Activated CD4-positive, alpha-beta T cell treated with anti-CD3 and anti-CD28 coated beads for 36 hours (primary cell): ENCODE measurements at regions of chr1 and their contacts with region 1.

Region 1: GRCh38 chr1:24830680-24831272 is 85.5 kb downstream of the CLIC4 start:
- DNase-seq: no peak
- ATAC-seq: peak; percentile 36
- H3K4me3 Mint-ChIP-seq: no peak overlapping the region
- H3K27ac Mint-ChIP-seq: no peak overlapping the region
- H3K4me1 Mint-ChIP-seq: no peaks in the 10 kb centered on the region
- H3K27me3 Mint-ChIP-seq: no peaks in the 10 kb centered on the region

Region 2: GRCh38 chr1:24721533-24721932 is 109.2 kb before region 1 on chr1:
- CTCF ChIA-PET with region 1: interaction called, 11 read pairs
- POLR2A ChIA-PET with region 1: no interaction called
- intact Hi-C with region 1: no loop called
- DNase-seq: no peak
- ATAC-seq: no peak
- H3K4me3 Mint-ChIP-seq: no peak overlapping the region
- H3K27ac Mint-ChIP-seq: no peak overlapping the region
- H3K4me1 Mint-ChIP-seq: peaks cover 7% of the 10 kb centered on the region
- H3K27me3 Mint-ChIP-seq: no peaks in the 10 kb centered on the region

Region 3: DNA sequence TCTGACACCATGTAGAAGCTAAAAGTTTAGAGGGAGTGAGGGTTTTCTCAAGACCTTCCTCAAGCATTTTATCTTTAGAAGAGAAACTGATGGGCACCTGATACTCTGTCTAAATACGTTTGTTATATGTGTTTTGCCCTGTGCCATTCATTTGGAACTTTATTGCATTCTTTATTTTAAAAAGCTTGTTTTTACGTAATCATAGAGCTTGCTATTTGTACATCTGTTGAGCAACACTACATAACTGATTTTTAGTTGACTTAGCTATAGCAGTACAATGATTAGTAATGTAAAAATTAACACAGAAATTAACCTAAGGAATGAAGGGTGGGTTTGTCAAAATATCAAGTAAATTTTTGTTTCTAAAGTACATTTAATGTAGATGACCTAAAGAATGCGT is 10.8 kb after region 1 on chr1:
- CTCF ChIA-PET with region 1: interaction called, 26 read pairs
- POLR2A ChIA-PET with region 1: no interaction called
- intact Hi-C with region 1: no loop called
- DNase-seq: no peak
- ATAC-seq: no peak
- H3K4me3 Mint-ChIP-seq: no peak overlapping the region
- H3K27ac Mint-ChIP-seq: no peak overlapping the region
- H3K4me1 Mint-ChIP-seq: no peaks in the 10 kb centered on the region
- H3K27me3 Mint-ChIP-seq: peaks cover 5% of the 10 kb centered on the region